ENCODE measurements at regions of chr6 and their contacts with region 1.

Region 1: DNA sequence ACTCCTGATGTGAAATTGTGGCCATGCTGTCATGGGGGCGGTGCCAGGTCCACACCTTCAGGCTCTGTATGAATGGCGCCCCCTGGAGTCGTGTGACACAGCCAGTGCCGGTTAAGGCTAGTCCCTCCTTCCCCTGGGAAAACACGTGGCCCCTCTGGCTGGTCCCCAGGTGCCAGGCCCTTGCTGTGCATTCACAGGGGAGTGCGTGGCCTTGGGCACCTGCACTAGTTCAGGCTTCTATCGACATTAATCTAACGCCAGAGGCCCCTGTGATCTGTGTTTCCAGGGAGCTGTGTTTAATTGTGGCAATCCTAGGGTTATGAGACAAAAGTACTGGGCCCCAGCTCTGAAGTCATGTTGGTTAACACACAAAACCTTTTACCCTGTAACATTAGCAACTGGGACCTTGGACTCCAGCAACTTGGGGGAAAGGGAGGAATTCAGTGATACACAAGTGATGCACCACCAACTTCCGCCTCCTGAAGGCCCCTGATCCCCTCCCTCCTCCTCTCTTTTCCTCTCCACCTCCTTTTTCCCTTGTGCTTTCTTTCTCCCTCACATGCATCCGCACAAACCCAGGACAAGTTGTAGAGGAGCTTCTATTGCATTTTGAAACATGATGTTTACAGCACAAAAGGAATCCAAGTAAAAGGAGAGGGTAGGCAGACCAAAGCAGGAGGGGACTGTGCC is 74.0 kb downstream of the SSR1 start:
- DNase-seq: peak; percentile 93
- ATAC-seq: peak; percentile 85
- H3K4me3 Mint-ChIP-seq: no peak overlapping the region
- H3K27ac Mint-ChIP-seq: peak overlapping the region; percentile 47
- H3K4me1 Mint-ChIP-seq: peaks cover 35% of the 10 kb centered on the region
- H3K27me3 Mint-ChIP-seq: no peaks in the 10 kb centered on the region
- CTCF ChIP-seq: peak; percentile 68

Region 2: DNA sequence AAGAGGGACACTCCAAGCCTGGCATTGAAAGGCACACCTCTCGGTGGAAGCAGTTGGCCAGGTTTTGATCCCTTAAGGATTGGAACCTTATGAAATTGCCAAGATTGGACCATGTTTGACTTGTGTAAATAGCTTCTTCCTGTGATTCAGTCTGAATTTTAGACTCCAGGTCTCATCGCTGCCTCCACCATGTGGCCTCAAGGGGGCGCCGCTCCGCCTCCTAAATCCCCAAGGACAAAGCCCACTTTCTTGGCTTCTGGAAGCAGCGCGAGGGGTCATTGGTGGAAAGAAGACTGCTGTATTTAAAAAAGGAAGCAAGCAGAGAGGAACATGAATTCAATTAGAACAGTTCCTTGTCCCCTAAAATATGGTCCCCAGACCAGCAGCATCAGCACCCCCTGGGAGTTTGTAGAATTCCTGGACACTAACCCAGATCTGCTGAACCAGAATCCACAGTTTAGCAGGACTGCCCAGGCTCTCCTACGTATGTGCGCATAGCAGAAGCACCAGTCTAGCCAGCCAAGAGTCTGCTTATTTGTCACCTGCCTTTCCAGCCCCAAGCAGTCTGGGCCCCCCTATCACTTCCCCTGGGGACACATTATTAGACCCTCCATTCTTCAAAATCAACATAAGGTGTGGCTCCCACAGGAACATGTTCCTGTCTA is 542.0 kb before region 1 on chr6:
- CTCF ChIA-PET with region 1: interaction called, 12 read pairs
- POLR2A ChIA-PET with region 1: no interaction called
- intact Hi-C with region 1: no loop called
- DNase-seq: peak; percentile 69
- ATAC-seq: peak; percentile 45
- H3K4me3 Mint-ChIP-seq: no peak overlapping the region
- H3K27ac Mint-ChIP-seq: no peak overlapping the region
- H3K4me1 Mint-ChIP-seq: no peaks in the 10 kb centered on the region
- H3K27me3 Mint-ChIP-seq: peaks cover 10% of the 10 kb centered on the region
- CTCF ChIP-seq: peak; percentile 73

Region 3: DNA sequence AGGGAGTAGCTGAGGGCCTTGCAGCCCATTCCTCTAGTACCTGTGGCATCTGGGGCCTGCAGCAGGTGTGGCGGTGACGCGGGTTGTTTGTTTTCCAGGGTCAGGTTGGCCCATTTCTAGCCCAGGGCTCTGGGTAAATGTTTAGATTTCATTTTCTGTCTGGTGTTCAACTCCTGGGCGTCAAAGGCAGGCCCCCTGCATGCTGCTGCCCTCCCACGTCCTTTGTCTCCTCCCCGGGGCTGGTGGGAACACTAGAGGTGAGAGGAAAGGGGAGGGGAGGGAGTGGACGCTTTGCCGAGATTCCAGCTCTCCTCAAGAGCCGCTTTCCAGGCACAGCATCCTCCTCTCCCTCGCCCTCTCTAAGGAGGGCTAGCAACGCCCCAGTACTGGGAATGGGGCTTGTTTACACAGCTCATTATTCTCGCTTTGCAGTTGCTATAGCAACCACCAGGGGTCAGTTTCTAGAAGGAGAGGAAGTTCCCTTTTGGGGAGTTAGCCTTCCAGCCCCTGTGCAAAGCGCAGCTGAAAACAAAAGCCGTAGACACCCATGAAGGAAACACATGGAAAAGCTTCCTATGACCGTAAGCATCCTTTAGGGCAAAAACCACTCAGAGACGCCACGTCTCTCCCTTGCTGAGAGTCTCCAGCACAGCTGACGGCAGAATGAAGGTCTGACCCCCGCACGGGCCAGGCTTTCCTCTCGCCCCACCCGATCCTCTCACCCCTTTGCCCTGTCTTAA is 480.0 kb before region 1 on chr6:
- CTCF ChIA-PET with region 1: interaction called, 12 read pairs
- POLR2A ChIA-PET with region 1: no interaction called
- intact Hi-C with region 1: no loop called
- DNase-seq: peak; percentile 43
- ATAC-seq: peak; percentile 75
- H3K4me3 Mint-ChIP-seq: no peak overlapping the region
- H3K27ac Mint-ChIP-seq: no peak overlapping the region
- H3K4me1 Mint-ChIP-seq: no peaks in the 10 kb centered on the region
- H3K27me3 Mint-ChIP-seq: peaks cover 1% of the 10 kb centered on the region
- CTCF ChIP-seq: no peak

Region 4: DNA sequence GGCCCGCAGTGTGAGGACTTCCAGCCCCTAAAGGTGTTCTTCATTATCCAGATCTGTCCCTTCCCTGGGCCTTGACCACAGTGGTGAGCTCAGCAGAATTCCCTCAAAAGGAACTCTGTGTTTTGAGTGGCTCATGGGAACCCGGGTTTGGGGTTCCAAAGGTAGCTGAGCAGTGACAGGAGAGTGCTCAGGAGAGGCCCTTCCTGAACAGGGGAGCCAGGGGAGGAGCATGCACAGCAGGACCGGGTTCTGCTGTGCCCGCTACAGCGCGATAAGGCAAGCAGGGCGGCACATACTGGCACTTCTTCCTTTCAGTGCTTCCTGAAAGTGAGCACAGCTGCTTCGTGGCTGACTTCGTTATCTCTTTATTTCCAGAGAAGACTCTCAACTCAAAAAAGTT is 14.3 kb before region 1 on chr6:
- CTCF ChIA-PET with region 1: interaction called, 11 read pairs
- POLR2A ChIA-PET with region 1: no interaction called
- intact Hi-C with region 1: no loop called
- DNase-seq: no peak
- ATAC-seq: no peak
- H3K4me3 Mint-ChIP-seq: no peak overlapping the region
- H3K27ac Mint-ChIP-seq: peak overlapping the region; percentile 10
- H3K4me1 Mint-ChIP-seq: peaks cover 7% of the 10 kb centered on the region
- H3K27me3 Mint-ChIP-seq: no peaks in the 10 kb centered on the region
- CTCF ChIP-seq: no peak

Region 5: GRCh38 chr6:7401075-7401474 is 162.0 kb after region 1 on chr6:
- CTCF ChIA-PET with region 1: no interaction called
- POLR2A ChIA-PET with region 1: no interaction called
- intact Hi-C with region 1: no loop called
- DNase-seq: no peak
- ATAC-seq: no peak
- H3K4me3 Mint-ChIP-seq: no peak overlapping the region
- H3K27ac Mint-ChIP-seq: no peak overlapping the region
- H3K4me1 Mint-ChIP-seq: no peaks in the 10 kb centered on the region
- H3K27me3 Mint-ChIP-seq: no peaks in the 10 kb centered on the region
- CTCF ChIP-seq: no peak